Ascending aorta (tissue), 2 donors: ENCODE measurements at regions of chr2 and their contacts with region 1.

Region 1: GRCh38 chr2:39513641-39514094 is 76.6 kb upstream of the MAP4K3 start:
- DNase-seq: peak in 1 of 2 donors; percentile 91
- H3K4me3 ChIP-seq: no peak overlapping the region
- H3K27ac ChIP-seq: peak overlapping the region; percentile 43 to 69
- H3K4me1 ChIP-seq: peaks cover 12 to 37% of the 10 kb centered on the region in 2 donors
- H3K27me3 ChIP-seq: no peaks in the 10 kb centered on the region
- CTCF ChIP-seq: peak; percentile 52 to 61 (median 60)

Region 2: GRCh38 chr2:39568561-39569006 is 54.9 kb after region 1 on chr2:
- intact Hi-C with region 1: loop called (anchors 5 kb)
- DNase-seq: no peak
- H3K4me3 ChIP-seq: no peak overlapping the region
- H3K27ac ChIP-seq: peak overlapping the region; percentile 64 to 83
- H3K4me1 ChIP-seq: peaks cover 2 to 23% of the 10 kb centered on the region in 2 donors
- H3K27me3 ChIP-seq: no peaks in the 10 kb centered on the region
- CTCF ChIP-seq: no peak